ENCODE measurements at regions of chr5 and their contacts with region 1.

Region 1: DNA sequence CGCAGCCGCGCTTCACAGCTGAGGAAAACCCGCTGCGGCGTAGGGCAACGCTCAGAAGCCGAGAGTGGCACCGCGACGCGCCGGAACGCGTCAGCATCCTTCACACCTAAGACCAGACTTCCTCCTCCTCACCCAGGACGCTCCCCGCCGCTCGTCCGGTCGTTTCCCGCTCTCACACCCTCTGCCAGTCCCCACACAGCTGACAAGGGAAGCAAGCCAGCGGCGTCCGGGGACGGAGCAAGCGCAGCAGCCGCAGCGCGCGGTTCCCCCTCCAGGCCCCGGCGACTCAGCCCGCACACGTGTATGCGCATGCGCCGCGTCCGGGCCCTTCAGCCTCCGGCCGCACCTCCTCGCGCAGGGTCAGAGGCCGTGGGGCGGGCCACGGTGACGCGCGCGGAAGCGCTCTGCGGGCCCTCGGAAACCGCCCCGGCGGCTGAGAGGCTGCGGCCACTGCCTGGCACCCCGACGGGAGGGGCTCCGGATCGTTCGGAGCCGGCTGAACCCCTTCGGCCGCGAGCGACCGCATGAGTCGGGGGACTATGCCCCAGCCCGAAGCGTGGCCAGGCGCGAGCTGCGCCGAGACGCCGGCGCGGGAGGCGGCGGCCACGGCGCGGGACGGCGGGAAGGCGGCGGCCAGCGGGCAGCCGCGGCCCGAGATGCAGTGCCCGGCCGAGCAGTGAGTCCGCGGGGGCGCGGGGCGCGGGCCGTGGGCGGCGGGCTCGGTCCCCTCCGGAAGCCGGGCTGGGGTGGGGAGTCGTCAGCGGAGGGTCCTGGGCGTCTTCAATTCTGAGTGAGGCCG is at the start of gene OTULIN:
- DNase-seq: peak; percentile 86
- H3K4me3 Mint-ChIP-seq: peak within 1 kb of the TSS; percentile 98
- H3K27ac Mint-ChIP-seq: peak within 1 kb of the TSS; percentile 98
- H3K4me1 Mint-ChIP-seq: peaks cover 72% of the 10 kb centered on the region
- H3K27me3 Mint-ChIP-seq: no peaks in the 10 kb centered on the region
- total RNA-seq, gene OTULIN: 57.4 and 58.7 TPM in 2 replicates

Region 2: GRCh38 chr5:14142827-14143548 is 521.5 kb before region 1 on chr5 and contains the start of gene TRIO:
- intact Hi-C with region 1: loop called (anchors 2 kb)
- DNase-seq: peak; percentile 66
- H3K4me3 Mint-ChIP-seq: peak within 1 kb of the TSS; percentile 83
- H3K27ac Mint-ChIP-seq: peak within 1 kb of the TSS; percentile 72
- H3K4me1 Mint-ChIP-seq: peaks cover 14% of the 10 kb centered on the region
- H3K27me3 Mint-ChIP-seq: peaks cover 51% of the 10 kb centered on the region
- total RNA-seq, gene TRIO: 10.2 and 11.4 TPM in 2 replicates

Region 3: GRCh38 chr5:14581333-14581890 is 83.1 kb before region 1 on chr5 and contains the start of gene OTULINL:
- intact Hi-C with region 1: loop called (anchors 1 kb)
- DNase-seq: peak; percentile 77
- H3K4me3 Mint-ChIP-seq: peak within 1 kb of the TSS; percentile 80
- H3K27ac Mint-ChIP-seq: peak within 1 kb of the TSS; percentile 61
- H3K4me1 Mint-ChIP-seq: peaks cover 35% of the 10 kb centered on the region
- H3K27me3 Mint-ChIP-seq: peaks cover 10% of the 10 kb centered on the region
- total RNA-seq, gene OTULINL: 13.6 and 14.0 TPM in 2 replicates

Region 4: GRCh38 chr5:14644623-14645237 is 19.8 kb before region 1 on chr5:
- intact Hi-C with region 1: loop called (anchors 1 kb)
- DNase-seq: no peak
- H3K4me3 Mint-ChIP-seq: no peak overlapping the region
- H3K27ac Mint-ChIP-seq: no peak overlapping the region
- H3K4me1 Mint-ChIP-seq: no peaks in the 10 kb centered on the region
- H3K27me3 Mint-ChIP-seq: peaks cover 17% of the 10 kb centered on the region

Region 5: GRCh38 chr5:14685757-14686156 is 21.3 kb after region 1 on chr5:
- intact Hi-C with region 1: loop called (anchors 1 kb)
- DNase-seq: no peak
- H3K4me3 Mint-ChIP-seq: no peak overlapping the region
- H3K27ac Mint-ChIP-seq: peak overlapping the region; percentile 93
- H3K4me1 Mint-ChIP-seq: peaks cover 38% of the 10 kb centered on the region
- H3K27me3 Mint-ChIP-seq: no peaks in the 10 kb centered on the region

Region 6: GRCh38 chr5:14871210-14872069 is 206.9 kb after region 1 on chr5 and contains the start of gene ANKH:
- intact Hi-C with region 1: loop called (anchors 2 kb)
- DNase-seq: peak; percentile 81
- H3K4me3 Mint-ChIP-seq: peak within 1 kb of the TSS; percentile 97
- H3K27ac Mint-ChIP-seq: peak within 1 kb of the TSS; percentile 94
- H3K4me1 Mint-ChIP-seq: peaks cover 24% of the 10 kb centered on the region
- H3K27me3 Mint-ChIP-seq: peaks cover 19% of the 10 kb centered on the region
- total RNA-seq, gene ANKH: 34.2 and 35.6 TPM in 2 replicates

Region 7: DNA sequence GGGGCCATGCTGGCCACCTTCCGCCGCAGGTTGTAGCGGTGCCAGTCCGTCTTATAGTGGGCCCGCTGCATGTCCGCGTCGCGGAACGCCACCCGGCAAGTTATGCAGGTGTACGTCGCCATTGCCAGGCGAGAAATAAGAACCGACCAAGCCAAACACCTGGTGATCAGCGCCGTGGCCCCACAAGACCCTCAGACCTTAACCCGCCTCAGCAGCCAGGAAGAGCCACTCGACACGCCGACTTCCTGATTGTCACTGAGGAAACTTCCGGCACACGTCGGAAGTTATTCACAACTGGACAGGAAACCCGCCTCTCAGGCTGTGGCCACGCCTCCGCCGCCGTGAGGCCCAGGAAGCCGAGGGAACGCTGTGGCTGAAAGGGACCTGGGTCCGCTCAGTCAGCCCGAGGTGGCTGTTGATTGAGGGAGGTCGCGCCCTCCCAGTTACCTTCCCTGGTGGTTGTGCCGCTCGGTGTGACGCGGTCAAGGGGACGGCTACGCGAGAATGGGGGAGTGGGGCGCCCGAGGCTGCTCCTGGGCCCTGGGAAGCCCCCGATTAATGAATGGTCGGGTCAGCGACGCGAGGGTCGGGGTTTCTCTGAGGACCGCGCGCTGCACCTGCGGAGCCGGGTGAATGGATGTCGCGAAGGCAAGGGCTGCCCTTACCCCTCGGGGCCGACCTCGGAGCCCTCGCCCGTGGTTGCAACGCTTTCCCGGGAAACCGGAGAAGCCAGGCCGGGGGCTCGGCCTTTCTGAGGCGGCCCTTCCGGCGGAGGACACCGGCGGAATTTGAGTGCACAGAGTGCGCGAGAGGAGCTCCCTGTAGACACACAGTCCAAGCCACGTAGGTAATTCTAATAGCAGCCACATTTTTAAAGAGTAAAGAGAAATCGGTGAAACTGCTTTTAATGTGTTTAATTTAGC is 1801.3 kb after region 1 on chr5 and contains the start of gene ZNF622:
- intact Hi-C with region 1: loop called (anchors 5 kb)
- DNase-seq: peak; percentile 86
- H3K4me3 Mint-ChIP-seq: peak within 1 kb of the TSS; percentile 99
- H3K27ac Mint-ChIP-seq: peak within 1 kb of the TSS; percentile 95
- H3K4me1 Mint-ChIP-seq: peaks cover 66% of the 10 kb centered on the region
- H3K27me3 Mint-ChIP-seq: no peaks in the 10 kb centered on the region
- total RNA-seq, gene ZNF622: 54.4 and 55.6 TPM in 2 replicates

Measured in activated T-helper 1 cell treated with anti-CD3 and anti-CD28 coated beads, Interleukin-12 subunit alpha, Interleukin-12 subunit beta, Interleukin-2, Interleukin-4 antibody, amounts not matched to agents 30 ng/mL and 10 ng/mL and 1 ng/mL, durations not matched to agents 14 hours and 24 hours and 36 hours (primary cell).